HepG2 (cell line): ENCODE measurements at regions of chr6 and their contacts with region 1.

Region 1: DNA sequence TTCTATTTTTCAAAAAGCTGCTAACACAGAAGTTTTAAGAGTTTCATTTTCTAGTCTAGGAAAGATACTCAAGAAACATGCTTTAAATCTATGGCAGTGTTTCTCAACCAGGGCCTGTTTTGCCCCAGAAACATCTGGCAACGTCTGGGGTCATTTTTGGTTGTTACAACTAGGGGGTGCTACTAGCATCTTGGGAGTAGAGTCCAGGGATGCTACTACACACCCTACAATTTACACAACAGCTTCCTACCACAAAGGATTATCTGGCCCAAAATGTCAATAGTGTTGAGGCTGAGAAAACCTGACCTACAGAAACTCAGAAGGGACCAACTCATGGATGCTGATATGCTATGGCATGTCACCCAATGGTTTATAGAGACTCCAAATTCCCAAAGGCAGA is 24.4 kb downstream of the SERAC1 start:
- DNase-seq: peak; percentile 48
- ATAC-seq: peak; percentile 82
- H3K4me3 ChIP-seq: no peak overlapping the region
- H3K27ac ChIP-seq: no peak overlapping the region
- H3K4me1 ChIP-seq: no peaks in the 10 kb centered on the region
- H3K27me3 ChIP-seq: no peaks in the 10 kb centered on the region
- CTCF ChIP-seq: peak; percentile 79
- EP300 ChIP-seq: no peak
- POLR2A ChIP-seq: no peak
- RAD21 ChIP-seq: peak; percentile 64

Region 2: GRCh38 chr6:158060455-158061360 is 83.0 kb before region 1 on chr6:
- CTCF ChIA-PET with region 1: no interaction called
- POLR2A ChIA-PET with region 1: no interaction called
- in situ Hi-C with region 1: no loop called
- intact Hi-C with region 1: no loop called
- DNase-seq: no peak
- ATAC-seq: peak; percentile 18
- H3K4me3 ChIP-seq: no peak overlapping the region
- H3K27ac ChIP-seq: peak overlapping the region; percentile 28
- H3K4me1 ChIP-seq: peaks cover 8% of the 10 kb centered on the region; the same call in 1 of the 2 replicates
- H3K27me3 ChIP-seq: no peaks in the 10 kb centered on the region
- CTCF ChIP-seq: no peak
- EP300 ChIP-seq: no peak
- POLR2A ChIP-seq: no peak
- RAD21 ChIP-seq: no peak

Region 3: DNA sequence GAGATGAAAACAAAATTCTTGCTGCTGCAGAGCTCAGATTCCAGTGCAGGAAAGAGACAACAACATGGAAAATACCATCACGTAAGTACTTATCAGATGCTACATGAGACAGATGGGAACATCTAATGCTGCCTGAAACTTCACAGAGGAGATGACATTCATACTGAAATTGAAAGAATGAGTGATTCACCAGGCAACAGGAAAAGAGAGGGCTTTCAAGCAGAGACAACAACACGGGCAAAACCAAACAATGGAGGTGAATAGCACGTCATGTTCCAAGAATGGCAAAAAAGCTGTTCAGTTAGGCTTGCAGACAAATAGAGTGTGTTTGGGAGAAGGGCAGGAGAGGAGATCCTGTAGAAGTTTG is 63.7 kb after region 1 on chr6:
- CTCF ChIA-PET with region 1: interaction called, 19 read pairs
- POLR2A ChIA-PET with region 1: interaction called, 3 read pairs
- in situ Hi-C with region 1: loop called (anchors 5 kb)
- intact Hi-C with region 1: loop called (anchors 1 kb)
- DNase-seq: peak; percentile 80
- ATAC-seq: peak; percentile 21; the same call in 2 of the 3 replicates
- H3K4me3 ChIP-seq: no peak overlapping the region
- H3K27ac ChIP-seq: no peak overlapping the region
- H3K4me1 ChIP-seq: peaks cover 42% of the 10 kb centered on the region
- H3K27me3 ChIP-seq: 0 out of 5 replicates have a peak, but pooled peaks cover 0 to 6% of the 10 kb centered on the region in 2 experiments
- CTCF ChIP-seq: no peak
- EP300 ChIP-seq: no peak
- POLR2A ChIP-seq: no peak
- RAD21 ChIP-seq: no peak